GM18951 (cell line): ENCODE measurements at regions of chr19 and their contacts with region 1.

Region 1: DNA sequence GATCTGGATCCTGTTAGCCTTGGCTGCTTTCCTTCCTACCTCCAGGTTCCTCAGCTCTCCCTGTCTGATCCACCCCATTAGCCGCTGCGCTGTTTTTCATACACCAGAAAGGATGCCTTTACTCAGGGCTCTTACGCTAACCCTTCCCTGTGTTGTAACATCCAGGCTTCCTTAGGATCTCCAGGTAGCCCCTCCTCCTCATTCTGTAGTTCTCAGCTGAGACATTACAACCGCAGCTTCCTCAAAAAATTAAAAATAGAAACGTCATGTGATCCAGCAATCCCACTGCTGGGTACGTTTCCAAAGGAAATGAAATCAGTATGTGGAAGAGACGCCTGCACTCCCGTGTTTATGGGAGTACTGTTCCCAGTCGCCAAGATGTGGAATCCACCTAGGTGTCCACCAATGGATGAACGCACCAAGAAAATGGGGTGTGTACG is 18.4 kb upstream of the MYADM start:
- POLR2A ChIP-seq: no peak

Region 2: GRCh38 chr19:54017261-54017660 is 168.0 kb after region 1 on chr19:
- in situ Hi-C with region 1: loop called (anchors 10 kb)
- POLR2A ChIP-seq: no peak

Region 3: GRCh38 chr19:54430306-54431254 is 581.3 kb after region 1 on chr19:
- in situ Hi-C with region 1: no loop called
- POLR2A ChIP-seq: no peak